ENCODE measurements at regions of chr2 and their contacts with region 1.

Region 1: GRCh38 chr2:17540093-17540812 is at the start of gene VSNL1:
- DNase-seq: peak; percentile 90 to 95
- H3K4me3 ChIP-seq: peak within 1 kb of the TSS; percentile 58
- H3K4me3 Mint-ChIP-seq: peak within 1 kb of the TSS; percentile 71
- H3K27ac Mint-ChIP-seq: peak within 1 kb of the TSS; percentile 4
- H3K4me1 ChIP-seq: peaks cover 24% of the 10 kb centered on the region
- H3K4me1 Mint-ChIP-seq: peaks cover 11% of the 10 kb centered on the region
- H3K27me3 ChIP-seq: no peaks in the 10 kb centered on the region; the same call in 1 of the 2 replicates
- H3K27me3 Mint-ChIP-seq: peaks cover 22% of the 10 kb centered on the region
- CTCF ChIP-seq: peak in 1 of 2 experiments; percentile 12
- total RNA-seq, gene VSNL1: 0.43 and 0.60 TPM in 2 replicates

Region 2: GRCh38 chr2:17518212-17519154 is 21.8 kb before region 1 on chr2 and contains the start of gene RAD51AP2:
- CTCF ChIA-PET with region 1: no interaction called
- POLR2A ChIA-PET with region 1: no interaction called
- intact Hi-C with region 1: loop called (anchors 1 kb)
- DNase-seq: peak; percentile 73 to 81
- H3K4me3 ChIP-seq: peak within 1 kb of the TSS; percentile 39
- H3K4me3 Mint-ChIP-seq: peak within 1 kb of the TSS; percentile 66
- H3K27ac Mint-ChIP-seq: no peak within 1 kb of the TSS
- H3K4me1 ChIP-seq: no peaks in the 10 kb centered on the region
- H3K4me1 Mint-ChIP-seq: no peaks in the 10 kb centered on the region
- H3K27me3 ChIP-seq: no peaks in the 10 kb centered on the region
- H3K27me3 Mint-ChIP-seq: peaks cover 20% of the 10 kb centered on the region
- CTCF ChIP-seq: no peak
- total RNA-seq, gene RAD51AP2: not detected in 2 replicates

Region 3: GRCh38 chr2:17573085-17573803 is 33.0 kb after region 1 on chr2:
- CTCF ChIA-PET with region 1: no interaction called
- POLR2A ChIA-PET with region 1: no interaction called
- intact Hi-C with region 1: no loop called
- DNase-seq: no peak
- H3K4me3 ChIP-seq: no peak overlapping the region
- H3K4me3 Mint-ChIP-seq: no peak overlapping the region
- H3K27ac Mint-ChIP-seq: no peak overlapping the region
- H3K4me1 ChIP-seq: no peaks in the 10 kb centered on the region
- H3K4me1 Mint-ChIP-seq: no peaks in the 10 kb centered on the region
- H3K27me3 ChIP-seq: no peaks in the 10 kb centered on the region
- H3K27me3 Mint-ChIP-seq: peaks cover 12% of the 10 kb centered on the region
- CTCF ChIP-seq: no peak

Region 4: GRCh38 chr2:17594533-17595401 is 54.5 kb after region 1 on chr2:
- CTCF ChIA-PET with region 1: no interaction called
- POLR2A ChIA-PET with region 1: no interaction called
- intact Hi-C with region 1: loop called (anchors 1 kb)
- DNase-seq: no peak
- H3K4me3 ChIP-seq: no peak overlapping the region
- H3K4me3 Mint-ChIP-seq: no peak overlapping the region
- H3K27ac Mint-ChIP-seq: peak overlapping the region; percentile 22
- H3K4me1 ChIP-seq: peaks cover 22% of the 10 kb centered on the region
- H3K4me1 Mint-ChIP-seq: peaks cover 20% of the 10 kb centered on the region
- H3K27me3 ChIP-seq: no peaks in the 10 kb centered on the region
- H3K27me3 Mint-ChIP-seq: no peaks in the 10 kb centered on the region
- CTCF ChIP-seq: no peak

Measured in Caco-2 (cell line).